Endothelial cell of umbilical vein (primary cell): ENCODE measurements at regions of chr11 and their contacts with region 1.

Region 1: GRCh38 chr11:62753736-62754603 is at the start of gene ZBTB3:
- DNase-seq: peak; percentile 100
- H3K4me3 ChIP-seq: peak within 1 kb of the TSS; percentile 32 to 71 (median 67)
- H3K27ac ChIP-seq: peak within 1 kb of the TSS; percentile 61
- H3K4me1 ChIP-seq: peaks cover 5% of the 10 kb centered on the region
- H3K27me3 ChIP-seq: no peaks in the 10 kb centered on the region
- CTCF ChIP-seq: no peak
- POLR2A ChIP-seq: peak; percentile 75
- total RNA-seq, gene ZBTB3: 6.9 and 8.1 TPM in 2 replicates

Region 2: DNA sequence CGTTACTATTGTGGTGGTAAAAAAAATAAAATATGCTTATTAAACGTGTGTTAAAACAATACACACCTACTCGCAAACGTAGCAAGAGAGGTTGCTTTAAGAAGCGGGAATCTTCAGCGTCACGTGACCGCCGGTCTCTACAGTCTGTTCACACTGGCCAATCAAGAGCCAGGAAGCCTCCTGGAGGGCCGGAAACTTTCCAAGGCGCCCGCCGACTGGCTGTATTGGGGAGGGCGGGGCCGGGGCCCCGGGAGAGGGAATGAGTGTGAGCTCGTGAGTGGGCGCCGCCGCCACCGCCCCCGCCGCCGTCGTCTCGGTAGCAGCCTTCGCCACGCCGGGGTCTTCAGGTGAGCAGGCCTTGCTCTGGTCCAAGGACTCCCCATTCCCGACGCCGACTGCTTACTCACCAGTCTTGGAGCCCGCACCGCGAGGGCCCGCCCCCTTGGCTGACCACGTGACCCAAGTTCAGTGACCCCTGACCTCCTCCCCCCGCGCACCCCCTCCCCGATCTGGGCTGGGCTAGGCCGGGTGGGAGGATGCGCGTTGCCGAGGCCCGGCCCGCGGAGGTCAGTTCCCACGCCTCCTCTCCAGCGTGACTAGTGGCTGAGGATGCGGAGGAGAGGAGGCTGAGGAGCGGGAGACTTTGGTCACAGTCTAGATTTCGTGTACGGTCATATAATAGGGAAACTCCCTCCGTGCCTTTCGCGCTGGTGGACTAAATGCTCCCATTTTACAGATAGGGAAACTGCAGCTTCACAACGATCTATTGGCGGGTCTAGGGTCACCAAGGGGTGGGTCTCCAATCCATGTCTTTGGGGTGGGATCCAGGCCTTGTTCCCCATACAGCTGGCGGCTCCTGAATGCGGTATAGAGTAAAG is 17.4 kb after region 1 on chr11 and contains the start of gene TAF6L:
- CTCF ChIA-PET with region 1: interaction called, 7 read pairs
- POLR2A ChIA-PET with region 1: interaction called, 18 read pairs
- dilution Hi-C with region 1: no loop called
- intact Hi-C with region 1: no loop called
- DNase-seq: peak; percentile 96
- H3K4me3 ChIP-seq: peak within 1 kb of the TSS; percentile 4 to 53 (median 48)
- H3K27ac ChIP-seq: peak within 1 kb of the TSS; percentile 39
- H3K4me1 ChIP-seq: peaks cover 11% of the 10 kb centered on the region
- H3K27me3 ChIP-seq: no peaks in the 10 kb centered on the region
- CTCF ChIP-seq: no peak
- POLR2A ChIP-seq: peak; percentile 74
- total RNA-seq, gene TAF6L: 28.9 and 30.4 TPM in 2 replicates

Region 3: GRCh38 chr11:62823677-62824076 is 69.7 kb after region 1 on chr11:
- CTCF ChIA-PET with region 1: no interaction called
- POLR2A ChIA-PET with region 1: no interaction called
- dilution Hi-C with region 1: no loop called
- intact Hi-C with region 1: no loop called
- DNase-seq: no peak
- H3K4me3 ChIP-seq: no peak overlapping the region
- H3K27ac ChIP-seq: no peak overlapping the region
- H3K4me1 ChIP-seq: no peaks in the 10 kb centered on the region
- H3K27me3 ChIP-seq: no peaks in the 10 kb centered on the region
- CTCF ChIP-seq: no peak
- POLR2A ChIP-seq: no peak